Heart right ventricle (tissue), 16 donors: ENCODE measurements at regions of chr14 and their contacts with region 1.

Region 1: GRCh38 chr14:50101417-50101816 is 15.0 kb downstream of the VCPKMT start:
- DNase-seq: no peak
- ATAC-seq: no peak
- H3K4me3 ChIP-seq: no peak overlapping the region
- H3K27ac ChIP-seq: no peak overlapping the region
- H3K4me1 ChIP-seq: peaks cover 0 to 6% (median 0%) of the 10 kb centered on the region in 9 donors
- H3K27me3 ChIP-seq: no peaks in the 10 kb centered on the region
- CTCF ChIP-seq: no peak

Region 2: GRCh38 chr14:49879683-49880204 is 221.7 kb before region 1 on chr14:
- intact Hi-C with region 1: loop called in 5 of 10 experiments (anchors 5 to 10 kb)
- DNase-seq: peak in 1 of 2 donors; percentile 30
- ATAC-seq: peak in 7 of 8 donors; percentile 50 to 81 (median 75)
- H3K4me3 ChIP-seq: no peak overlapping the region
- H3K27ac ChIP-seq: peak overlapping the region in 1 of 10 donors; percentile 37
- H3K4me1 ChIP-seq: peaks cover 0 to 17% (median 0%) of the 10 kb centered on the region in 9 donors
- H3K27me3 ChIP-seq: no peaks in the 10 kb centered on the region
- CTCF ChIP-seq: peak; percentile 21 to 73 (median 65)

Region 3: DNA sequence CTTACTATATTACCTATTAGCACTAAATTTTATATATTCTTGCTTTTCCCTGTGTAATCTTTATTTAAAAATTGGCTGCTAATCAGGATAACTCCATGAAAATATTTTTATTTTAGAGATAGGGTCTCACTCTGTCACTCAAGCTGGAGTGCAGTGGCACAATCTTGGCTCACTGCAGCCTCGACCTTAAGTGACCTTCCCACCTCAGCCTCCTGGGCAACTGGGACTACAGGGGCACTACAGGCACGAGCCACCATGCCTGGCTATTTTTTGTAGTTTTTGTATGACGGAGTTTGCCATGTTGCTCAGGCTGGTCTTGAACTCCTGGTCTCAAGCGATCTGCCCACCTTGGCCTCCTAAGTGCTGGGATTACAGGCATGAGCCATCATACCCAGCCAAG is 47.4 kb after region 1 on chr14:
- intact Hi-C with region 1: no loop called
- DNase-seq: no peak
- ATAC-seq: peak in 1 of 8 donors; percentile 42
- H3K4me3 ChIP-seq: no peak overlapping the region
- H3K27ac ChIP-seq: no peak overlapping the region
- H3K4me1 ChIP-seq: no peaks in the 10 kb centered on the region
- H3K27me3 ChIP-seq: no peaks in the 10 kb centered on the region
- CTCF ChIP-seq: no peak

Region 4: GRCh38 chr14:50452979-50453705 is 351.7 kb after region 1 on chr14:
- intact Hi-C with region 1: no loop called
- DNase-seq: no peak
- ATAC-seq: peak in 2 of 8 donors; percentile 14 to 29
- H3K4me3 ChIP-seq: no peak overlapping the region
- H3K27ac ChIP-seq: peak overlapping the region in 1 of 10 donors; percentile 31
- H3K4me1 ChIP-seq: peaks cover 0 to 5% (median 0%) of the 10 kb centered on the region in 9 donors
- H3K27me3 ChIP-seq: no peaks in the 10 kb centered on the region
- CTCF ChIP-seq: no peak